Panc1 (cell line): ENCODE measurements at regions of chr17 and their contacts with region 1.

Region 1: DNA sequence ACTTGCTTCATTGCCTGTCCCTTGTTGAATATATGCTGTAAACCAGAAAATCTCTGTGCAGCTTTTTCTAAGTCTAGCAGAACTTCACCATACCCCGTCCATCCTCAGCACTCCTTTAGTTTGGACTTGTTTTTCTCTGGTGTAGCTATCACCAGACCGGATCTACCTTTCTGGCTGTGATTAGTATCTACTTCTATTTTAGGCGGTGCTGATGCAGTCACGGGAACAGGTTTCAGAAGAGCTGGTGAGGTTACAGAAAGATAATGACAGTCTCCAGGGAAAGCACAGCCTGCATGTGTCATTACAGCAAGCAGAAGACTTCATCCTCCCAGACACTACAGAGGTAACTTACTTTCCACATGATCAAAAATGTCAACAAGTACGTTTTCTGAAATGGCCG is 46.4 kb downstream of the NUP88 start:
- DNase-seq: no peak
- ATAC-seq: no peak
- H3K4me3 ChIP-seq: no peak overlapping the region
- H3K27ac ChIP-seq: no peak overlapping the region
- H3K4me1 ChIP-seq: no peaks in the 10 kb centered on the region
- H3K27me3 ChIP-seq: no peaks in the 10 kb centered on the region
- CTCF ChIP-seq: no peak

Region 2: GRCh38 chr17:5329784-5330557 is 43.1 kb before region 1 on chr17:
- CTCF ChIA-PET with region 1: no interaction called
- POLR2A ChIA-PET with region 1: interaction called, 20 read pairs
- in situ Hi-C with region 1: no loop called
- intact Hi-C with region 1: no loop called
- DNase-seq: no peak
- ATAC-seq: no peak
- H3K4me3 ChIP-seq: no peak overlapping the region
- H3K27ac ChIP-seq: no peak overlapping the region
- H3K4me1 ChIP-seq: no peaks in the 10 kb centered on the region
- H3K27me3 ChIP-seq: no peaks in the 10 kb centered on the region
- CTCF ChIP-seq: no peak

Region 3: GRCh38 chr17:5422505-5422904 is 49.4 kb after region 1 on chr17:
- CTCF ChIA-PET with region 1: no interaction called
- POLR2A ChIA-PET with region 1: no interaction called
- in situ Hi-C with region 1: no loop called
- intact Hi-C with region 1: no loop called
- DNase-seq: no peak
- ATAC-seq: no peak
- H3K4me3 ChIP-seq: no peak overlapping the region
- H3K27ac ChIP-seq: no peak overlapping the region
- H3K4me1 ChIP-seq: peaks cover 5% of the 10 kb centered on the region
- H3K27me3 ChIP-seq: no peaks in the 10 kb centered on the region
- CTCF ChIP-seq: no peak